ENCODE measurements at regions of chr20 and their contacts with region 1.

Region 1: DNA sequence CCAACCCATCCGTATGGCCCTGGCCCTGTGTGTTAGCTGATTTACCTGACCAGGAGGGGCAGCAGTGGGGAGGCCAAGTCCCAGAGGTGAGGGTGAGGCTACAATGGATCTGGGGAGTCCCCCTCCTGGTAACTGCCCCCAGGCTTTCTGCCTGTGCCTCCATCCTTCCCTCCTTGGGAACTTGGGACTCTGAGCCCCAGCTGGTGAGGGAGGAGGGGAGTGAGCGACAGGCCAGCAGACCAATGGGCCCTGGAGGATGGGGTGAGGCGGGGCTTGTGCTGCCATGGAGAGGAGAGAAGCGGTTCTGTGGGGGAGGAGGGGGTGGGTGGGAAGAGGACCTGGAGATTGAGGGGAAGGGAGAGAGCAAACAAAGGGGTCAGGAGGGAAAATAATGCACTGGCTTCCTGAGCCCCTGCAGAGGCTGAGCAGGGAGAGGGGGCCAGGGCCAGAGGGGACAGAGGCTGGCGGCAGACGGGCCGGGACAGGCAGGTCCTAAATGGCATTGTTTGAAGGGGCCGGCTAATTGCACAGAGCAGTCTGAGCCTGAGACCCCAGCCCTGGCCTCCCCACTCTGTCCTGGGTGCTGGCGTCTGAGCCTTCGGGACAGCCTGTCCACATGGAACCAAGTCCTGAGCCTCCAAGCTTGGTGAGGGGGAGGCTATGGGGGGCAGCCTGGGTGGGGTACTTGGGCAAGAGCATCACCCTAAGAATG is 17.5 kb downstream of the DNMT3B start:
- DNase-seq: peak; percentile 81
- ATAC-seq: peak; percentile 45
- H3K4me3 Mint-ChIP-seq: no peak overlapping the region
- H3K27ac Mint-ChIP-seq: no peak overlapping the region
- H3K4me1 Mint-ChIP-seq: peaks cover 75% of the 10 kb centered on the region
- H3K27me3 Mint-ChIP-seq: no peaks in the 10 kb centered on the region
- CTCF ChIP-seq: no peak

Region 2: DNA sequence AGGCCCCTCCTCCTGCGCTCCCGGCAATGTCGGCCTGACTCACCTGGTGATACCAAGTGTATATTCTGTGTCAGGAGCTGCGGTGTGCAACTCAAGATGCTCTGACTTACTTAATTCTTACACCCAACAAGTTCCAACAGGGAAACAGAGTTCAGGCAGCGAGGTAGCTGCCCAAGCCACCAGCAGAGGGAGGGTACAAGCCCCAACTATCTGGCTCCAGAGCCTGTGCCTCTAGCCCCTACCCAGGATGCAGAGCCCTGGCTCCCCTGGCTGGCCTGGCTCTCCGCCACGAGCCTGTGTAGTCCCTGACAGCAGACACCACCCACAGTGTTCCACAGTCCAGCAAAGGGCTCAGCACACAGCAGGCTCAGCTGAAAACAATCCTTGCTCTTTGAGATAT is 140.8 kb before region 1 on chr20:
- CTCF ChIA-PET with region 1: no interaction called
- POLR2A ChIA-PET with region 1: no interaction called
- DNase-seq: no peak
- ATAC-seq: peak; percentile 65
- H3K4me3 Mint-ChIP-seq: no peak overlapping the region
- H3K27ac Mint-ChIP-seq: no peak overlapping the region
- H3K4me1 Mint-ChIP-seq: peaks cover 7% of the 10 kb centered on the region
- H3K27me3 Mint-ChIP-seq: peaks cover under 1% of the 10 kb centered on the region; the same call in 1 of the 2 replicates
- CTCF ChIP-seq: no peak

Region 3: GRCh38 chr20:32674362-32674789 is 105.3 kb before region 1 on chr20:
- CTCF ChIA-PET with region 1: interaction called, 138 read pairs
- POLR2A ChIA-PET with region 1: interaction called, 3 read pairs
- DNase-seq: peak; percentile 69
- ATAC-seq: peak; percentile 53
- H3K4me3 Mint-ChIP-seq: no peak overlapping the region
- H3K27ac Mint-ChIP-seq: no peak overlapping the region; the same call in 1 of the 2 replicates
- H3K4me1 Mint-ChIP-seq: peaks cover 42% of the 10 kb centered on the region
- H3K27me3 Mint-ChIP-seq: no peaks in the 10 kb centered on the region
- CTCF ChIP-seq: peak; percentile 61

Region 4: DNA sequence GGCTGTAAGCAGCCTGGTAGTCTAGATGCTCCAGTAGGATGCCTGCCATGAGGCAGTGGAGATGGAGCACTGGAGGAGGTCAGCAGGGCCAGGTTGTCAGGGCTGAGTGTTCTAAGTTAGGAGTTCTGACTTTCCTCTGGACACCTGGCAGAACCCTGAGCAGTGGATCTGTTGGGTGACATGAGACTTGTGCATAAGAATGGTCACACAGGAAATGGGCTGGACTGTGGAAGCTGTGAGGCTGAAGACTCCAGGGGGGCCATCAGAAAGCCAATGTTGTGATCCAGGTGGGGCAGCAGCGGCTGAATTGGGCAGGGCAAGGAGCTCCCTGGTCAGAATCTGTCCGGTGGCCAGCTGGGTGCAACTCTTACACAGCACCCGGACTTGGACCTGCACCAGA is 82.0 kb before region 1 on chr20:
- CTCF ChIA-PET with region 1: interaction called, 11 read pairs
- POLR2A ChIA-PET with region 1: no interaction called
- DNase-seq: no peak
- ATAC-seq: peak; percentile 40
- H3K4me3 Mint-ChIP-seq: no peak overlapping the region
- H3K27ac Mint-ChIP-seq: peak overlapping the region; percentile 41; the same call in 1 of the 2 replicates
- H3K4me1 Mint-ChIP-seq: peaks cover 26% of the 10 kb centered on the region
- H3K27me3 Mint-ChIP-seq: no peaks in the 10 kb centered on the region
- CTCF ChIP-seq: no peak

Region 5: GRCh38 chr20:32707691-32708581 is 71.7 kb before region 1 on chr20:
- CTCF ChIA-PET with region 1: interaction called, 27 read pairs
- POLR2A ChIA-PET with region 1: interaction called, 5 read pairs
- DNase-seq: no peak
- ATAC-seq: peak; percentile 49
- H3K4me3 Mint-ChIP-seq: no peak overlapping the region
- H3K27ac Mint-ChIP-seq: peak overlapping the region; percentile 90
- H3K4me1 Mint-ChIP-seq: peaks cover 43% of the 10 kb centered on the region
- H3K27me3 Mint-ChIP-seq: no peaks in the 10 kb centered on the region
- CTCF ChIP-seq: no peak

Region 6: GRCh38 chr20:32737371-32738223 is 42.1 kb before region 1 on chr20:
- CTCF ChIA-PET with region 1: interaction called, 63 read pairs
- POLR2A ChIA-PET with region 1: interaction called, 7 read pairs
- DNase-seq: no peak
- ATAC-seq: no peak
- H3K4me3 Mint-ChIP-seq: no peak overlapping the region
- H3K27ac Mint-ChIP-seq: no peak overlapping the region
- H3K4me1 Mint-ChIP-seq: peaks cover 16% of the 10 kb centered on the region
- H3K27me3 Mint-ChIP-seq: no peaks in the 10 kb centered on the region
- CTCF ChIP-seq: no peak

Region 7: GRCh38 chr20:32756156-32756555 is 23.5 kb before region 1 on chr20:
- CTCF ChIA-PET with region 1: interaction called, 12 read pairs
- POLR2A ChIA-PET with region 1: interaction called, 5 read pairs
- DNase-seq: no peak
- ATAC-seq: peak; percentile 32
- H3K4me3 Mint-ChIP-seq: no peak overlapping the region
- H3K27ac Mint-ChIP-seq: peak overlapping the region; percentile 95
- H3K4me1 Mint-ChIP-seq: peaks cover 76% of the 10 kb centered on the region
- H3K27me3 Mint-ChIP-seq: no peaks in the 10 kb centered on the region
- CTCF ChIP-seq: no peak

Region 8: GRCh38 chr20:33309631-33310030 is 530.0 kb after region 1 on chr20:
- CTCF ChIA-PET with region 1: no interaction called
- POLR2A ChIA-PET with region 1: no interaction called
- DNase-seq: no peak
- ATAC-seq: no peak
- H3K4me3 Mint-ChIP-seq: no peak overlapping the region
- H3K27ac Mint-ChIP-seq: no peak overlapping the region
- H3K4me1 Mint-ChIP-seq: no peaks in the 10 kb centered on the region
- H3K27me3 Mint-ChIP-seq: no peaks in the 10 kb centered on the region
- CTCF ChIP-seq: no peak